Heart right ventricle (tissue), 16 donors: ENCODE measurements at regions of chr7 and their contacts with region 1.

Region 1: DNA sequence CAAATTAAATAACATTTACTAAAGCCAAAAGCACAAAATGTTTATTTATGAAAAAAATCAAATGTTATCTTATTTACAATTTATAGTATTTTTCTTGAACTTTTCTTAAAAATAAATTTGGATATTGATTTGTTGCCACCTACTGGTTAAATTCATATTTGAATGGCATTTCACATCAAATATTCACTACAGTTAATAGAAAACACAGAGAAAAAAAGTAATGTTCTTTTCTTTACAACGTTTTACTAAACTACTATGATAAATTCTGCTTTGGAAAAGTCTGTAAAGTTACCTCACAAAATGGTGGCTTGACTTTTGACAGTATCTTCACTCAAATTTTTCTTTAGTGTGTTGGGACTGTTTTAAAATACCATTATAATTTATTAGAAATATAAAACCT is 52.7 kb downstream of the SRPK2 start:
- DNase-seq: no peak
- ATAC-seq: no peak
- H3K4me3 ChIP-seq: no peak overlapping the region
- H3K27ac ChIP-seq: no peak overlapping the region
- H3K4me1 ChIP-seq: peaks cover 0 to 18% (median 6%) of the 10 kb centered on the region in 9 donors
- H3K27me3 ChIP-seq: no peaks in the 10 kb centered on the region
- CTCF ChIP-seq: peak; percentile 22 to 66 (median 50)

Region 2: GRCh38 chr7:105131033-105131656 is 204.9 kb before region 1 on chr7:
- intact Hi-C with region 1: loop called in 1 of 10 experiments (anchors 10 kb)
- DNase-seq: no peak
- ATAC-seq: no peak
- H3K4me3 ChIP-seq: no peak overlapping the region
- H3K27ac ChIP-seq: peak overlapping the region in 1 of 10 donors; percentile 9
- H3K4me1 ChIP-seq: peaks cover 0 to 44% (median 8%) of the 10 kb centered on the region in 9 donors
- H3K27me3 ChIP-seq: no peaks in the 10 kb centered on the region
- CTCF ChIP-seq: no peak

Region 3: DNA sequence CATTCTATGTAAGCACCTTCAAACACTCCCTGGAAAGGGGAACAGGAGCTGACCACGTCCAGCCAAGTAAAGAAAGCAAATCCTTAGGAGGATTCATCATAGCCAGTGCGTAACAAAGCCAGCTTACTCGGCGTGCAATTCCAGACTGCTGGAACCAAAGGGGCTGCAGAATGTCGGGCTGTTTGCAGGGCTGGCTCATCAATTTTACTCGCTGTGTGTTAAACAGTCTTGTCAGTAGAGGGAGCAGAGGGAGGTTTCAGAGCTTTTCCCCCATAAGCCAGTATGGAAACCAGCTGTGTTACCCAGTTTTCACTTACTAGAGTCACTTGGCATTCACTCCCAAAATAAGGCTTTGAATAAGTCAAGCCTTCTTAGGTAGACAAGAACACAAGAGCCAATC is 194.9 kb before region 1 on chr7:
- intact Hi-C with region 1: loop called in 4 of 10 experiments (anchors 10 kb)
- DNase-seq: no peak
- ATAC-seq: peak in 2 of 8 donors; percentile 34 to 46
- H3K4me3 ChIP-seq: no peak overlapping the region
- H3K27ac ChIP-seq: no peak overlapping the region
- H3K4me1 ChIP-seq: peaks cover 0 to 14% (median 6%) of the 10 kb centered on the region in 9 donors
- H3K27me3 ChIP-seq: no peaks in the 10 kb centered on the region
- CTCF ChIP-seq: peak in 6 of 9 donors; percentile 15 to 45 (median 26)

Region 4: GRCh38 chr7:105156731-105157130 is 179.3 kb before region 1 on chr7:
- intact Hi-C with region 1: loop called in 3 of 10 experiments (anchors 2 to 10 kb)
- DNase-seq: no peak
- ATAC-seq: no peak
- H3K4me3 ChIP-seq: no peak overlapping the region
- H3K27ac ChIP-seq: no peak overlapping the region
- H3K4me1 ChIP-seq: peaks cover 0 to 20% (median 14%) of the 10 kb centered on the region in 9 donors
- H3K27me3 ChIP-seq: no peaks in the 10 kb centered on the region
- CTCF ChIP-seq: no peak

Region 5: GRCh38 chr7:105387621-105388372 is 51.8 kb after region 1 on chr7:
- intact Hi-C with region 1: no loop called
- DNase-seq: peak; percentile 53 to 63
- ATAC-seq: peak; percentile 66 to 79 (median 73)
- H3K4me3 ChIP-seq: peak overlapping the region; percentile 48 to 98 (median 96)
- H3K27ac ChIP-seq: peak overlapping the region in 9 of 10 donors; percentile 3 to 90 (median 78)
- H3K4me1 ChIP-seq: peaks cover 0 to 20% (median 9%) of the 10 kb centered on the region in 9 donors
- H3K27me3 ChIP-seq: no peaks in the 10 kb centered on the region
- CTCF ChIP-seq: peak in 3 of 9 donors; percentile 16 to 28 (median 23)